Caco-2 (cell line): ENCODE measurements at regions of chr1 and their contacts with region 1.

Region 1: DNA sequence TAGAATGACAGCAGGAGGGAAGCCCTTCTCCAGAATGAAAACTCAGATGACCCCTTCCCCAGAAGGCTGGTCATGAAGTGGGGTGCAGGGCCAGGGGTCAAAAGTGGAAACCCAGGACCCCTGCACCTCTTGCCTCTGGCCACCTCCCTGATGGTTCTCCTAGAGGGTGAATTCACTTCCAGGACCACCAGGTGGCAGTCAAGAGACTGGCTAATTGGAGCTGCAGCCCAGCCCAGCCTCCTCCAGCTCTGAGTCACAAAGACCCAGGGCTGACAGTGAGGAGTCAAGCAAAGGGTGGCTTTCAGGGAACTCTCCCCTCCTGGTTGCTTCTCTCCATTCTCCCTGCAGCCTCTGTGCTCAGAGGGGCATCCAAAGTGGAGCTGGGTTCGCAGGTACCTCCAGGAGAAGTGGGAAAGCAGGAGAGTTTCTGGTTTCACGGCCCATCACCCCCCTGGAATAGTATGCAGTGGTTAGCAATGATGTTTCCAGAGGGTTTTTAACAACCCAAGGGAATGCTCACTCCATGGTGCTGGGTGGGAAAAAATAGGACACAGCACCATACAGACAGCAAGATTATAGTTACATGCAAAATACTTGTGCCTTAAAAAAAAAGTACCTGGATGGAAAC is 6.1 kb upstream of the EPHB2 start:
- DNase-seq: peak; percentile 86 to 89
- H3K4me3 ChIP-seq: no peak overlapping the region
- H3K4me3 Mint-ChIP-seq: no peak overlapping the region
- H3K27ac Mint-ChIP-seq: peak overlapping the region; percentile 63
- H3K4me1 ChIP-seq: peaks cover 34% of the 10 kb centered on the region
- H3K4me1 Mint-ChIP-seq: peaks cover 35% of the 10 kb centered on the region
- H3K27me3 ChIP-seq: no peaks in the 10 kb centered on the region
- H3K27me3 Mint-ChIP-seq: no peaks in the 10 kb centered on the region
- CTCF ChIP-seq: peak; percentile 86 to 92

Region 2: DNA sequence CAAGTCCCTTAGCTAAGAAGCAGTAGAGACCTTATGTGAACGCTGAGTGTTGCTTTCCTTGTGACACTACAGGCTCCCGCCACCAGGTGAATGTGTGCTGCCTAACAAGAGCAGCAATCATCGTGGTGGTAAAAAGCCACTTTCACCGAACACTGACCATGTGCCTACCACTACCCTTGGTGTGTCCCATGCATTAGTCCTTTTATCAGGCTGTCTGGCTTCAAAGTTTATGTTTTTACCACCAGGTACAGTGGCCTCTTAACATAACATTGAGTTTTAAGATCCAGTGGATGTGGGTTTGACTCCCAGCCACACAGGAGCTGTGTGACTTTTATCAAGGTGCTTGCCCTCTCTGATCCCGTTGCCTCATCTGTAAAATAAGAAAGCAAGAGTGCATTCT is 49.9 kb before region 1 on chr1:
- CTCF ChIA-PET with region 1: interaction called, 10 read pairs
- POLR2A ChIA-PET with region 1: no interaction called
- intact Hi-C with region 1: no loop called
- DNase-seq: no peak
- H3K4me3 ChIP-seq: no peak overlapping the region
- H3K4me3 Mint-ChIP-seq: no peak overlapping the region
- H3K27ac Mint-ChIP-seq: no peak overlapping the region
- H3K4me1 ChIP-seq: no peaks in the 10 kb centered on the region
- H3K4me1 Mint-ChIP-seq: no peaks in the 10 kb centered on the region
- H3K27me3 ChIP-seq: no peaks in the 10 kb centered on the region
- H3K27me3 Mint-ChIP-seq: peaks cover 10% of the 10 kb centered on the region
- CTCF ChIP-seq: peak in 1 of 2 experiments; percentile 24

Region 3: DNA sequence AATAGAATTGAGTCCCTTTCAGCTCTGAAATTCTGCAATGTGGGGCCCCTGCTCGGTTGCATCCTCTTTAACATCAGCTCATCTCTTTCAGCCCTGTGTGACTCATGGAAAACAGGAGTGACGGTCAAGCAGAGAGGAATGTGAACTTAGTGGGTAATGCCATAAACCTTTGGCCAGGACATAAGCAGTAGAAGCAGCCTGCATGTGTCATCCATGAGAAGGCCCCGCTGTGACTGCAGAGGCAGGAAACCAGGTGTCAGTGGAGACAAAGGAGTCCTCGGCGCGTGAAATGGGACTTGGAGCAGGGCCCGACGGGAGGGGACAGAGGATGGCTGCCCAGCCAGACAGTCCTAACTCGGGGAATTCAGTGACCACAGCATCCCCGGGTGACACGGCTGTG is 15.0 kb before region 1 on chr1:
- CTCF ChIA-PET with region 1: interaction called, 11 read pairs
- POLR2A ChIA-PET with region 1: interaction called, 3 read pairs
- intact Hi-C with region 1: no loop called
- DNase-seq: peak; percentile 78 to 86
- H3K4me3 ChIP-seq: no peak overlapping the region
- H3K4me3 Mint-ChIP-seq: no peak overlapping the region
- H3K27ac Mint-ChIP-seq: peak overlapping the region; percentile 82
- H3K4me1 ChIP-seq: peaks cover 5% of the 10 kb centered on the region; the same call in 1 of the 2 replicates
- H3K4me1 Mint-ChIP-seq: peaks cover 22% of the 10 kb centered on the region
- H3K27me3 ChIP-seq: no peaks in the 10 kb centered on the region
- H3K27me3 Mint-ChIP-seq: no peaks in the 10 kb centered on the region
- CTCF ChIP-seq: peak in 1 of 2 experiments; percentile 20

Region 4: DNA sequence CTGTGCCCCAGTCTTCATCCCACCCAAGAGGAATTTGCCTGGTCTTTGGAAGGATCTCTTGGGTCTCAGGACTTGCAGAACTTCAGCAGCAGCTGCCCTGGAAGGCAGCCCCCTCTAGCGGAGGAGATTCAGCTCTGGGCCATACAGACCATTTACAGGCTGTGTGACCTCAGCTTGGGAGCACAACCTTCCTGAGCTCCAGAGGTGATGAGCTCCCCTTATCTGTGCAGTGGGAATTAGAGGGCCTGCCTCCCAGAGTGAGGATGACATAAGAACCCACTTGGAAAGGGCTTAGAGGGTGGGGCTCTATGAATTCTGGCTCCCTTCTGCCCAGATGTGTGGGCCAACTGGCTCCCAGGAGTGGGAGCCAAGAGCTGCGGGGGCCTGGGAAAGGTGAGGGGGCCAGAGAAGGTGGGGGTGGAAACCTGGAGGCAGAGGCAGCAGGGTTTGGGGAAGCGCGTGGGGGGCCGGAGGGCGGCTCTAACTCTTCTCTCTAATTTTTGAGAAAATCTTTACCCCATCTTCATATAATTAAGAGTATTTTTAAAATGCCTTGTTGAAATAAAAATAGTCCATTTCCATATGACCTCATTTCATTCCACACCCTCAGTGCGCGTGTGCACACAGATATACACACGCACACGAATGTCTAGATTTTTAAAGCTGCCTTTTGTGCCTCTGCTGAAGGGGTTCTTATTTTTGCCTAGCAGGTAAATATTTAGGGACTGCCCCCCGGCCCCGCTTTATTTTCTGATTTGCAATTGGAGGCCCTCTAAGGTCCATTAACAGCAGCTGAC is 27.6 kb after region 1 on chr1:
- CTCF ChIA-PET with region 1: interaction called, 30 read pairs
- POLR2A ChIA-PET with region 1: no interaction called
- intact Hi-C with region 1: loop called (anchors 1 kb)
- DNase-seq: peak in 1 of 2 experiments; percentile 43
- H3K4me3 ChIP-seq: no peak overlapping the region
- H3K4me3 Mint-ChIP-seq: no peak overlapping the region
- H3K27ac Mint-ChIP-seq: no peak overlapping the region
- H3K4me1 ChIP-seq: peaks cover 4% of the 10 kb centered on the region; the same call in 1 of the 2 replicates
- H3K4me1 Mint-ChIP-seq: no peaks in the 10 kb centered on the region
- H3K27me3 ChIP-seq: no peaks in the 10 kb centered on the region
- H3K27me3 Mint-ChIP-seq: no peaks in the 10 kb centered on the region
- CTCF ChIP-seq: peak; percentile 47 to 63

Region 5: GRCh38 chr1:22861764-22862440 is 157.3 kb after region 1 on chr1:
- CTCF ChIA-PET with region 1: interaction called, 16 read pairs
- POLR2A ChIA-PET with region 1: no interaction called
- intact Hi-C with region 1: loop called (anchors 5 kb)
- DNase-seq: peak; percentile 42 to 48
- H3K4me3 ChIP-seq: no peak overlapping the region
- H3K4me3 Mint-ChIP-seq: no peak overlapping the region
- H3K27ac Mint-ChIP-seq: no peak overlapping the region
- H3K4me1 ChIP-seq: no peaks in the 10 kb centered on the region
- H3K4me1 Mint-ChIP-seq: no peaks in the 10 kb centered on the region
- H3K27me3 ChIP-seq: no peaks in the 10 kb centered on the region
- H3K27me3 Mint-ChIP-seq: no peaks in the 10 kb centered on the region
- CTCF ChIP-seq: peak; percentile 74 to 79